ENCODE measurements at regions of chr12 and their contacts with region 1.

Region 1: DNA sequence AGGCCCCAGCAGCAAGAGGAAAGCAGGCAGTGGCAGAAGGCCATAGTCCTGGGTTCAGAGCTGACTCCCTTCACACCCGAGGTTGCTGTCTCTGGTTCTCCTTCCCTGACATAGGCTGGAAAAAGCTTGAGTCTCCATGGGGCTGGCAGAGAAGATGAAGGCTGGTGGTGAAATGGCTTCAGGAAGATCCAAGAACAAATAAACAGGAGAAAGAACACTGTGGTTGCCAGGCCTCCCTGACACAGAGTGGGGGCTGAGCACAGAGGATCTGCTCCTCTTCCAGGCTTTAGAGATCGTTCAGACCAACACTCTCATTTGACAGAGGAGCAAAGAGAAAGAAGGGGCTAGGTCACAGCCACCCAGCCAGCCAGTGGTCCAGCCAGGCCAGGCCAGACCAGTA is 14.3 kb downstream of the HDAC7 start:
- DNase-seq: no peak
- H3K4me3 ChIP-seq: peak overlapping the region in 1 of 4 donors; percentile 4
- H3K27ac ChIP-seq: peak overlapping the region; percentile 92 to 99 (median 98)
- H3K4me1 ChIP-seq: peaks cover 100% of the 10 kb centered on the region in 4 donors
- H3K27me3 ChIP-seq: no peaks in the 10 kb centered on the region
- CTCF ChIP-seq: no peak
- EP300 ChIP-seq: no peak
- POLR2A ChIP-seq: no peak

Region 2: GRCh38 chr12:47837190-47838171 is 32.1 kb after region 1 on chr12:
- intact Hi-C with region 1: loop called (anchors 2 kb)
- DNase-seq: no peak
- H3K4me3 ChIP-seq: no peak overlapping the region
- H3K27ac ChIP-seq: peak overlapping the region in 1 of 4 donors; percentile 55
- H3K4me1 ChIP-seq: peaks cover 12 to 28% (median 21%) of the 10 kb centered on the region in 4 donors
- H3K27me3 ChIP-seq: no peaks in the 10 kb centered on the region
- CTCF ChIP-seq: peak; percentile 91 to 97 (median 96)
- EP300 ChIP-seq: no peak
- POLR2A ChIP-seq: no peak